Activated CD4-positive, alpha-beta memory T cell treated with anti-CD3 and anti-CD28 coated beads, Interleukin-2, amount 10 ng/mL, durations not matched to agents 7 days and 5 days (primary cell): ENCODE measurements at regions of chr11 and their contacts with region 1.

Region 1: GRCh38 chr11:44621140-44621681 is 55.7 kb downstream of the CD82 start:
- DNase-seq: peak; percentile 70
- H3K4me3 Mint-ChIP-seq: no peak overlapping the region
- H3K27ac Mint-ChIP-seq: no peak overlapping the region
- H3K4me1 Mint-ChIP-seq: peaks cover 18% of the 10 kb centered on the region
- H3K27me3 Mint-ChIP-seq: no peaks in the 10 kb centered on the region

Region 2: DNA sequence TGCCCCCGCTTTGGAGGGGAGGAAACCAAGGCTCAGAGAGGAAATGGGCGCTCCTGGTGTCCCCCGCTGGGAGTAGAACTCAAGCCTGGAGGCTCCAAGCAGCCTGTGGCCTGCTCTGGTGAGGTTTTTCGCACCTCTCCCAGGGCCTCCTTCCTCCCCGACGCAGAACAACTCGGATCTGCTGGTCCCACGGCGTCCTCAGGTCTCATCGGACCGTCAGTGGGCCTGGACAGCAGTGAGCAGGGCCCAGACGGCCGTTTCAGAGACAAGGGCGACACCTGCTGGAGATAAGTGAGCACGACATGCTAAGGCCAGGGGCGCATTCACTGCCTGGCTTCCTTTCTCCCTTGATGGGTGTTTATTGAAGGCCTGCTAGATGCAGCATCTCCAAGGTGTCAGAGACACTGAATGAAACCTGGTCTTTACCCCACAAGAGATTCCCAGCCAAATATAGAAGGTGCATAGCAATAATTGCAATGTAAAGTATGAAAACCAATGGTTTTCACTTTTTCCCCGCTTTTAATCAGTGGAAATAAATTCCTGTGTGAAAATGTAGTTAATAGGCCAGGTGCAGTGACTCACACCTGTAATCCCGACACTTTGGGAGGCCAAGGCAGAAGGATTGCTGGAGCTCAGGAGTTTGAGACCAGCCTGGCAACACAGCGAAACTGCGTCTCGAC is 82.7 kb before region 1 on chr11:
- CTCF ChIA-PET with region 1: interaction called, 11 read pairs
- POLR2A ChIA-PET with region 1: no interaction called
- DNase-seq: peak; percentile 78
- H3K4me3 Mint-ChIP-seq: no peak overlapping the region
- H3K27ac Mint-ChIP-seq: no peak overlapping the region
- H3K4me1 Mint-ChIP-seq: no peaks in the 10 kb centered on the region
- H3K27me3 Mint-ChIP-seq: peaks cover 3% of the 10 kb centered on the region

Region 3: DNA sequence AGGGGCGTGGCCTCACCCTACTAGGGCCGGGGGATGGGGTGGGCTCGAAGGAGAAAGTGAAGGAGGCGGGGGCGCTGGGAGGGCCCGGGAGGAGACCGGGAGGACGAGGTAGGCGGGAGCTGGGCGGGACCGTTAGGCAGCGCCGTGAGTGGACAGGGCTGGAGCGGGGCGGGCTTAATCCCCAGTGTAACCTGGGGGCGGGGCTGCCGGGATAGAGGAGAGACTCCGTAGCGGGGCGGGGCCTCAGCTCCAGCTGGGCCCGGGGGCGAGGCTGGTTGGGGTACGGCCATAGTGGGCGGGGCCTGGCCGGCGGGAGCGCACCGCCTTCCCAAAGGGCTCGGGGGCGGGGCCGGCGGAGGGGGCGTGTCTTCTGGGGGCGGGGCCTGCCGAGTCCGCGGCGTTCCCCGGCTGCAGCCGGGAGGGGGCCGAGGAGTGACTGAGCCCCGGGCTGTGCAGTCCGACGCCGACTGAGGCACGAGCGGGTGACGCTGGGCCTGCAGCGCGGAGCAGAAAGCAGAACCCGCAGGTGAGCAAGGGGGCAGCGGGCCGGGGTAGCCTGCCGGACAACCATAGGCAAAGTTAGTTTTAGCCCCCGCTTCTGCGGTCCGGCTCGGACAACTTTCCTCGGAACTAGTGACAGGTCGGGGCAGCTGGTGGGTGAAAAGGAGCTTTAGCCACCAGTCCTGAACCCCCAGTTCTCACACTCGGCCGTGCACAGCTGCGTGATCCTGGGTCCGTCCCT is 55.8 kb before region 1 on chr11 and contains the start of gene CD82:
- CTCF ChIA-PET with region 1: interaction called, 425 read pairs
- POLR2A ChIA-PET with region 1: interaction called, 13 read pairs
- DNase-seq: peak; percentile 100
- H3K4me3 Mint-ChIP-seq: peak within 1 kb of the TSS; percentile 78
- H3K27ac Mint-ChIP-seq: peak within 1 kb of the TSS; percentile 90
- H3K4me1 Mint-ChIP-seq: peaks cover 57% of the 10 kb centered on the region
- H3K27me3 Mint-ChIP-seq: no peaks in the 10 kb centered on the region
- total RNA-seq, gene CD82: 193 to 208 TPM

Region 4: DNA sequence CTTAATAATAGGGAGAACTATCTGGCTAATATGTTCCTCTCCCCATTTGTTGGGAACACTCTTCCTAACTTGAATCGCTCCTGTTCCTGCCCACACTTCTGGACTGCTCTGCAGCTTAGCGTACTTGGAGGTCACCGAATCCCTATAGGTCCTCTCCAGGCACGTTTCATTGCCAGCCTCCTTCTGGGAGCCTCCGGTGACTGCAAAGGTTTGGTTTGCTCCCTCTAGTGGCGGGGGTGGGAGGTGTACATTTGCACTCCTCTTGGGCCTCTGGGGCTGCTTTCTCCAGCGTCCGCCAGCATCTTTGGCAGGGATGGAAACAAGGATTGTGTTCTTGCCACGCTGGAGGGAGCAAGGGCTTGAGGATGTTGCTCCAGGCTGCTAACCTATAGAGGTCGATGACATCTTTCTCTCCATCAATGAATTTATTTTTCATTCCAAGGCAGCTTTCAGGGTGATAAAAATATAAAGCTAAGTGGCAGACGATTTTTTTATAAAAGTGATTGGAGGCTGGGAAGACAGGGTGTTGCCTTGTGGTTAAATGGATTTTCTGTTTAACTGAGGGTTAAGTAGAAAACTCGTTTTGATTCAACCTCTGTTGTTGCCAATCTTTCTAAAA is 154.3 kb after region 1 on chr11:
- CTCF ChIA-PET with region 1: interaction called, 25 read pairs
- POLR2A ChIA-PET with region 1: no interaction called
- DNase-seq: peak; percentile 61
- H3K4me3 Mint-ChIP-seq: no peak overlapping the region
- H3K27ac Mint-ChIP-seq: no peak overlapping the region
- H3K4me1 Mint-ChIP-seq: no peaks in the 10 kb centered on the region
- H3K27me3 Mint-ChIP-seq: peaks cover 2% of the 10 kb centered on the region